SK-N-SH (cell line): ENCODE measurements at regions of chr11 and their contacts with region 1.

Region 1: DNA sequence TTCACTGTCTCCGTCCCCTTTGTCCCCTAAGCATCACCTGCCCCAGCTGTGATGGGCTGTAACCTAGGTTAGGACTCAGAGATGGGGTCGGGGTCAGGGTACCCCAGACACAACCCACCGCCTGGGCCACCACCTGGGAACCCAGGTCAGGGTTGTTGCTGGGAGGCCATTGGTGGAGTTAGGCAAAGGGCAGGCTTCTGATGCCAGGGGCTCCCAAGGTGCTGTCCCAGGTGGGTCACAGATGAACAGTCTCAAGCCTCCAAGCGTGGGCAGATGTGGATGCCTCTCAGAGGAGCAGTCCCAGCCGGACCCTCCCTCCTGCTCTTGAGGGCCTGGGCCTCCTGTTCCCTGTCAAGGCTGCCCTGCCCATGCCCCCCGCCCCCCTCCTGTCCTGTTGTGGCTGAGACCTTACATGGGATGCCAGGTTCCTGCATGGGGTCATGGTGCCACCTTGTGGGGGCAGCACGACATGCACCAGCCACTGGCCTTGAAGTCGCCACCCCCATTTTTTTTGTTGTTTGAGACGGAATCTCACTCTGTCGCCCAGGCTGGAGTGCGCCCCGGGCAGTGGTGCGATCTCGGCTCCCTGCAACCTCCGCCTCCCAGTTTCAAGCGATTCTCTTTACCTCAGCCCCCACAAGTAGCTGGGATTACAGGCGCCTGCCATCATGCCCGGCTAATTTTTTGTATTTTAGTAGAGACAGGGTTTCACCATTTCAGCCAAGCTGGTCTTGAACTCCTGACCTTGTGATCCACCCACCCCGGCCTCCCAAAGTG is 12.1 kb downstream of the GATD1 start:
- DNase-seq: peak; percentile 92
- H3K4me3 ChIP-seq: no peak overlapping the region
- H3K27ac ChIP-seq: no peak overlapping the region
- H3K4me1 ChIP-seq: peaks cover 5 to 9% of the 10 kb centered on the region in 2 experiments; a peak in 2 of 4 replicates
- H3K27me3 ChIP-seq: no peaks in the 10 kb centered on the region
- CTCF ChIP-seq: peak; percentile 65
- EP300 ChIP-seq: no peak
- RAD21 ChIP-seq: peak; percentile 67

Region 2: DNA sequence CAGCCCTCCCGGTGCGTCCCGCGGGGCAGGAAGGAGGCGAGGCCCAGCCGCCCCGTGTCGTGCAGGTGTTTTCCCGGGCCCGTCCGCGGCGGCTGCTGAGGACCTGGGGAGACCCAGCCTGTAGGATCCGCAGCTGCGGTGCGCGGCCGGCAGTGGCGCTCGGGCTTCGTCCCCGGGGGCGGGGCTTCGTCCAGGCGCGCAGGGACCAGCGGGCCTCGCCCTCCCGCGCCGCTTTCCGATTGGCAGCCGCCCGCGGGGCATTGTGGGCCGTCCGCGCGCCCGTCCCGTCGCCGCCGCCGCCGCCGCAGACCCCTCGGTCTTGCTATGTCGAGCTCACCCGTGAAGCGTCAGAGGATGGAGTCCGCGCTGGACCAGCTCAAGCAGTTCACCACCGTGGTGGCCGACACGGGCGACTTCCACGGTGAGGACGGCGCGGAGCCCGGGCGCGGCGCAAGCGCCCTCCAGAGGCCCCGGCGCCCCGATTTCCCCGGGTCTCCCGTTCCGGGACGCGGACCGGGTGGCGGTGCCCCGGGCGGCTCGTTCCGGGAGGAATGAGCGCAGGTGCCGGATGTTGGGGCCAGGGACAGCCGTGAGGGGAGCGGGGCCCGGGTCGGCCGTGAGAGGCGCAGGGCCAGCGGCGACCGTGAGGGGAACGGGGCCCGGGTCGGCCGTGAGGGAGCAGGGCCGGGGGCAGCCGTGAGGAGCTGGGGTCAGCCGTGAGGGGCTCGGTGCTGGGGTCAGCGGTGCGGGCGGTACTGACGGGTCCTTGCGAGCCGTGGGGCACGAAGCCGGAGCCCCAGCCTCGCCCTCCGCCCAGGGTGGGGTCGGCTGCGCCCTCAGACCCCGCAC is 17.8 kb before region 1 on chr11 and contains the start of gene TALDO1:
- CTCF ChIA-PET with region 1: interaction called, 33 read pairs
- POLR2A ChIA-PET with region 1: interaction called, 3 read pairs
- DNase-seq: peak; percentile 99
- H3K4me3 ChIP-seq: peak within 1 kb of the TSS; percentile 86 to 90
- H3K27ac ChIP-seq: peak within 1 kb of the TSS; percentile 15 to 77; a peak in 2 of 4 replicates
- H3K4me1 ChIP-seq: peaks cover 0 to 16% of the 10 kb centered on the region in 2 experiments; a peak in 3 of 4 replicates
- H3K27me3 ChIP-seq: no peaks in the 10 kb centered on the region
- CTCF ChIP-seq: no peak; the same call in 1 of the 2 replicates
- EP300 ChIP-seq: no peak
- RAD21 ChIP-seq: no peak
- polyA plus RNA-seq, gene TALDO1: 78.4 and 103 TPM in 2 replicates

Region 3: GRCh38 chr11:777288-778255 is 12.4 kb after region 1 on chr11 and contains the start of gene GATD1:
- CTCF ChIA-PET with region 1: interaction called, 31 read pairs
- POLR2A ChIA-PET with region 1: interaction called, 4 read pairs
- DNase-seq: peak; percentile 100
- H3K4me3 ChIP-seq: peak within 1 kb of the TSS; percentile 85 to 87
- H3K27ac ChIP-seq: peak within 1 kb of the TSS; percentile 22 to 83; a peak in 3 of 4 replicates
- H3K4me1 ChIP-seq: peaks cover 11 to 19% of the 10 kb centered on the region in 2 experiments; a peak in 2 of 4 replicates
- H3K27me3 ChIP-seq: no peaks in the 10 kb centered on the region
- CTCF ChIP-seq: no peak
- EP300 ChIP-seq: no peak
- RAD21 ChIP-seq: no peak
- polyA plus RNA-seq, gene GATD1: 72.9 and 86.2 TPM in 2 replicates